HepG2 (cell line): ENCODE measurements at regions of chr18 and their contacts with region 1.

Region 1: GRCh38 chr18:59996370-59996966 is 96.7 kb downstream of the PMAIP1 start:
- DNase-seq: peak; percentile 15
- ATAC-seq: peak; percentile 67
- H3K4me3 ChIP-seq: no peak overlapping the region
- H3K27ac ChIP-seq: no peak overlapping the region
- H3K4me1 ChIP-seq: no peaks in the 10 kb centered on the region
- H3K27me3 ChIP-seq: no peaks in the 10 kb centered on the region
- CTCF ChIP-seq: peak; percentile 52
- EP300 ChIP-seq: no peak
- POLR2A ChIP-seq: no peak
- RAD21 ChIP-seq: no peak

Region 2: DNA sequence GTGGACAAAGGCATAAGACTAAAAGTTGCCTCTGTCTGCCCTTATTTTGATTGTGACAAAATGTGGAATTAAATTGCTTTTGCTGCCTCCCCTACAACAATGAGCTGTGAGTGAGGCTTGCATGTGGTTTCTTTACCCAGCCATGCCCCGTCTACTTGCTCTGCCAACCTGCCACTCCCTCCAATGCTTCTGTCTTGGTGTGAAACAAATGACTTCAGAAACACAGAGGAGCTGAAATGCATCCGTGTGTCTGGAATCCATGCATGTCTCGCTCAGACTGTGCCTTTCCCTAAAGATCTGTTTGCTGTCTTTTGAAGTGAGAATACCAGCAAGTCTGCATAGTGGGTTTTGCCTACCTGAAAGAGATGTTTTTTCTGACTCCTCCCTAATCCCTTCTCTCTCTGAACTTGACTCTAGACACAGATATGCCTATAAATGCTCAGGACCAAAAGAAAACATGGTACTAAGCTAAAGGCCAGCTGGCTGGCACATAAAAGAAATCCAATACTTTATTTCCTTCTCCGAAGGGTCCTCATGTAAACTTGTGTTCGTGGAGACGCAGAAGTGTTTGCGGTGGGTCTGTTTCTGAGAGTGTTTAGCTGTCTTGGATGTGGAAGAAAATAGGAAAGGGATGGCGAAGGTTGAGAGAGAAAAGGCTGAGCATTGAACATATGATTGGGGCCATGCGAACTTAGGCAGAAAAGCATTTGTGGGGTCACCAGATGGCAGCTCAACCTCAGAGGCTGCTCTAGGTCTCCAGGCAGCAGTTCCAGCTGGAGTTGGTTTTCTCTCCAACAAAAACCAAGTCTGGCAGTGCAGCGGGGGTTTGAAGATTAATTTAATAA is 419.7 kb before region 1 on chr18:
- CTCF ChIA-PET with region 1: no interaction called
- POLR2A ChIA-PET with region 1: no interaction called
- in situ Hi-C with region 1: no loop called
- intact Hi-C with region 1: no loop called
- DNase-seq: no peak
- ATAC-seq: no peak
- H3K4me3 ChIP-seq: no peak overlapping the region
- H3K27ac ChIP-seq: no peak overlapping the region
- H3K4me1 ChIP-seq: no peaks in the 10 kb centered on the region
- H3K27me3 ChIP-seq: peaks cover 0 to 13% of the 10 kb centered on the region in 2 experiments; a peak in 1 of 5 replicates
- CTCF ChIP-seq: no peak
- EP300 ChIP-seq: no peak
- POLR2A ChIP-seq: no peak
- RAD21 ChIP-seq: no peak

Region 3: GRCh38 chr18:59861963-59862819 is 134.3 kb before region 1 on chr18:
- CTCF ChIA-PET with region 1: no interaction called
- POLR2A ChIA-PET with region 1: no interaction called
- in situ Hi-C with region 1: no loop called
- intact Hi-C with region 1: no loop called
- DNase-seq: no peak
- ATAC-seq: peak; percentile 43; the same call in 1 of the 3 replicates
- H3K4me3 ChIP-seq: no peak overlapping the region
- H3K27ac ChIP-seq: no peak overlapping the region
- H3K4me1 ChIP-seq: peaks cover 10% of the 10 kb centered on the region
- H3K27me3 ChIP-seq: no peaks in the 10 kb centered on the region
- CTCF ChIP-seq: no peak
- EP300 ChIP-seq: no peak
- POLR2A ChIP-seq: no peak
- RAD21 ChIP-seq: no peak

Region 4: DNA sequence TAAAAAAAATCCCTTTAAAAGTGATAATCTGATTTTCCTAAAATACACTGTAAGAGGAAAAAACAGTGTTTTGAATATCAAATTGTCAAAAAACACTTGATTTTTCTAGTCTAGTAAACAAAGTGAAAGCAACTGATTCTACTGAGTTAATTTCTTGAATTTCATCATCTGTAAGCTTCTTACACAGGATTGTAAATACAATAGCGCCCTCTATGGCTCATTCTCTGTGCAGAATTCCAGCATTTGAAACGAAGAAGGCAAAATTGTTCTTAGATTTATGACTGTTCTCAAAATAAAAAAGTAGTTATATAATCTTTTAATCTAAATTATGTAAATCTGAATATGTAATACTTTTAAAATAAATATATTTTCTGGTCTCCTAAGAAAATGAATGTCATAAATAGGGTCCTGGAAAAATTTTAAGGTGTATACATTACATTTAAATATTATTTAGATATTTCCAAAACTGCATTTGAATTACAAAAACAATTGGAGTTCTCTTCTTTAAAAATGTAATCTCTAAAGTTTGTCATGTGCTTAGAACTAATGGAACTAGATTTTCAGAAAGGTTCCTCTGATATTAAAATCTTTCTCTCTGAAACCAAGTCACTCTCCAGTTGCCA is 553.0 kb after region 1 on chr18:
- CTCF ChIA-PET with region 1: interaction called, 7 read pairs
- POLR2A ChIA-PET with region 1: no interaction called
- in situ Hi-C with region 1: no loop called
- intact Hi-C with region 1: loop called (anchors 1 kb)
- DNase-seq: peak; percentile 44
- ATAC-seq: no peak
- H3K4me3 ChIP-seq: no peak overlapping the region
- H3K27ac ChIP-seq: no peak overlapping the region
- H3K4me1 ChIP-seq: no peaks in the 10 kb centered on the region
- H3K27me3 ChIP-seq: no peaks in the 10 kb centered on the region; a peak in 1 of 5 replicates
- CTCF ChIP-seq: peak; percentile 63
- EP300 ChIP-seq: no peak
- POLR2A ChIP-seq: no peak
- RAD21 ChIP-seq: peak; percentile 24; the same call in 1 of the 2 replicates